ENCODE measurements at regions of chr17 and their contacts with region 1.

Region 1: GRCh38 chr17:21126645-21127510 is at the start of gene DHRS7B:
- DNase-seq: peak; percentile 98
- H3K4me3 Mint-ChIP-seq: peak within 1 kb of the TSS; percentile 90
- H3K27ac Mint-ChIP-seq: peak within 1 kb of the TSS; percentile 88
- H3K4me1 Mint-ChIP-seq: peaks cover 31% of the 10 kb centered on the region
- H3K27me3 Mint-ChIP-seq: peaks cover 1% of the 10 kb centered on the region
- total RNA-seq, gene DHRS7B: 13.5 to 15.9 TPM

Region 2: DNA sequence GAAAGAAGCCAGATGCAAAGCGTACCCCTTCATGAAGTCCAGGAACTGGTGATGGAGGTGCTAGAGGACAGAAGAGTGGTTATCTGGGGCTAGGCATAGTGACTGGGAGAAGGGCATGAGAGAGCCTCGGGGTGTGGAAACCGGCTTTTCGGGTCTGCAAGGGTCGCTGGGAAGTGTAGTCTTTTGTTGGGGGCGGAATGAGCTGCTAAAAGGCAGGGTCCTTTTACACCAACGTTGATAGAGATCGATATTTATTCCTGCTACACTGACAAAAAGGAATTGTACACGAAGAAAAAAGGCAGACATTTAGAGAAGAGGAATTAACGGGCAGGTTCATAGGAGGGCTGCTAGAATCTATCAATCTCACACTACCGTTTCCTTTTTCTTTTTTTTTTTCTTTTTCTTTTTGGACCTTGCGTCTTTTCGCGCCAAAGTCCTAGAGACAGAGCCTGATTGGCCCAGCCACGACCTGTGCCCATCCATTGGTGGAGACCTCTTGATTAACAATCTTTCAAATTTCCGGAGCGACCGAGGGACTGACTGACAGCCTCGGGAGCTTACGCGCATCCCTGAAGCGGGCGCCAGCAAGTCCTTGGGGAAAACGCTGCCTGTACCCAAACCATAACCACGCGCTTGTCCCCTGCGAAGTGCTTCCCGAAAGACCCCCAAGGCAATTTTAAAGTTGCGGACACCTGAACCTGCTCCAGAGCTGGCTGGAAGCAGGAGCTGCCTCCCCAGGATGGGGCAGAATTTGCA is 27.8 kb before region 1 on chr17:
- CTCF ChIA-PET with region 1: interaction called, 4 read pairs
- POLR2A ChIA-PET with region 1: no interaction called
- intact Hi-C with region 1: loop called (anchors 1 kb)
- DNase-seq: peak; percentile 87
- H3K4me3 Mint-ChIP-seq: peak overlapping the region; percentile 97
- H3K27ac Mint-ChIP-seq: peak overlapping the region; percentile 88
- H3K4me1 Mint-ChIP-seq: peaks cover 4% of the 10 kb centered on the region
- H3K27me3 Mint-ChIP-seq: no peaks in the 10 kb centered on the region

Region 3: DNA sequence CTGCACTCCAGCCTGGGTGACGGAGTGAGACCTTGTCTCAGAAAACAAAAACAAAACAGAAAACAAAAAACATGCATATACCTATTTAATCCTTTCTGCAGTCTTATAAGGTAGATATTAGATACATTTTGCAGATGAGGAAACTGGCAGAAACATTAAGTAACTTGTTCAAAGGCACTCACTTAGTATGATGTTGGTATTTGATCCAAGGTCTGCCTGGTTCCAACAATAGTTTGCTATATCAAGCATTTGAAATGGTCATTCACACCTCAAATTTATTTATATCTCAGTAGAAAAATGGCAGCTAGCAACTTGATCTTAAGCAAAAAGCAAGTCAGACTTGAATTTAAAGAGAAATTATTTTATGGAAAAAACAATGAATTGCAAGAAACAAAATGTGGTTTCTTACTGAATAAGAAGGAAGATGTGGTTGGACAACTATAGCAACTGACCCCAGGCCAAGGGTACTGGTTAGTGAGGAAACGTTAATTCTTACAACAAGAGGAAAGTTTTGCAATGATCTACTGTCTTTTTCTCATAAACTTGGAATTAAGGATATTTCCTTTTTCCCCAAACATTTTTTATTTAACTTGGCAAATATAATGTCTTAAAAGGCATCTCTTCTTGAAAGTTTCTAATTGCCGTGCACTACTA is 19.6 kb after region 1 on chr17:
- CTCF ChIA-PET with region 1: no interaction called
- POLR2A ChIA-PET with region 1: no interaction called
- intact Hi-C with region 1: no loop called
- DNase-seq: no peak
- H3K4me3 Mint-ChIP-seq: no peak overlapping the region
- H3K27ac Mint-ChIP-seq: no peak overlapping the region
- H3K4me1 Mint-ChIP-seq: no peaks in the 10 kb centered on the region
- H3K27me3 Mint-ChIP-seq: no peaks in the 10 kb centered on the region

Region 4: DNA sequence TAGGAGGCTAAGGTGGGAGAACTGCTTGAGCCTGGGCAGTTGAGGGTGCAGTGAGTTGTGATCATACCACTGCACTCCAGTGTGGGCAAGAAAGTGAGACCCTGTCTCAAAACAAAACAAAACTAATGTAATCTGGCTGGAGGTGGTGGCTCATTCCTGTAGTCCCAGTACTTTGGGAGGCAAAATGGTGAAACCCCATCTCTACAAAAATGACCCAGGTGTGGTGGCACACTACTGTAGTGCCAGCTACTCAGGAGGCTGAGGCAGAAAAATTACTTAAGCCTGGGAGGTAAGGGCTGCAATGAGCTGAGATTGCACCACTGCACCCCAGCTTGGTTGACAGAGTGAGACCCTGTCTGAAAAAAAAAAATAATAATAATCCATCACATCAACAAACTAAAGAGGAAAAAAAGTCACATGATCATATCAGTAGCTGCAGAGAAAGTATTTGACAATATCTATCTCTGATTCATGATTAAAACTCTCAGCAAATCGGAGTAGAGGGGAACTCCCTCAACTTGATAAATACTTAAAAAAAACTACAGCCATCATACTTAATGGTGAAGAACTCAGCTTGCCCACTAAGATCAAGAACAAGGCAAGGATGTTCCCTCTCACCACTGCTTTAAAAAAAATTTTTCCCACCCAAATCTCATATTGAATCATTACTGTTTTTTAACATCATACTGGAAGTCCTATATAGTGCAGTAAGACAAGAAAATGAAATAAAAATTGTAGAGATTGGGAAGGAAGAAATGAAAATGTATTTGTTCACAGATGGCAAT is 30.9 kb after region 1 on chr17:
- CTCF ChIA-PET with region 1: interaction called, 3 read pairs
- POLR2A ChIA-PET with region 1: no interaction called
- intact Hi-C with region 1: loop called (anchors 2 kb)
- DNase-seq: peak; percentile 23
- H3K4me3 Mint-ChIP-seq: no peak overlapping the region
- H3K27ac Mint-ChIP-seq: no peak overlapping the region
- H3K4me1 Mint-ChIP-seq: peaks cover 20% of the 10 kb centered on the region
- H3K27me3 Mint-ChIP-seq: no peaks in the 10 kb centered on the region

Region 5: DNA sequence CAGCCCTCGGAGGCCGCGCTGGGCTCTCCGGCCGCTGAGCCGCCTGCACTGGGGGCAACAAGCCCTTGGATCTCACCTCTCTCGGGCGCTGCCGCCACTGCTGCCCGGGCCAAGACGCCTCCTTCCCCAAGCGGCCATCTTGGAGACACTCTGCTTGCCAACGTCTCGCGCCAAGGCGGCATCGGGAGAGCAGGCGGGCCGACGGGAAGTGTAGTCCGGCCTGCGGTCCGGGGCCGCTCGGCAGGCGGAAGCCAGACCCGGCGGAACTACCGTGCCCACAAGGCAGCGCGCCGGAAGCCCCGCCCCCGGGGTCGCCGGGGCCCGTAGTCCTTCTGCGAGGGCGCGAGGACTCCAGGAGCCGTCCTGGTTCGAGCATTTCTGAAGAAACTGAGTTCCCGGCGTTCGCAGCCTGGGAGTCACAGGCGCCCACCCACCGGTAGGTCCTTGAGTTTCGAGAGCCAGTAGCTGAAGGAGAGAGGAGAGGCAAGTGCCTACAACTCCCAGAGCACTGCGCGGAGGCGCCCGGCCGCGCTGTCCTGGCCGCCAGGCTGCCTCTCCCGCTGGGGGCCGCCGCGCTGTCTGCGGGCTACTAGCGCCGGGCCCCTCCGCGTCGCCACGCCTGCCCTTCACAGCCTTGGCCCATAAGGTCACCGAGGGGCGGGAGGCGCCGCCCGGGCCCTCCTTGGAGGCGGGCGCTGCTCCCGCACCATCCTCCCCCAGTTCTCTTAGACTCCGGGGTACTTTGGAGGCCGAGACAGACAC is 87.3 kb after region 1 on chr17 and contains the start of gene TMEM11:
- CTCF ChIA-PET with region 1: interaction called, 3 read pairs
- POLR2A ChIA-PET with region 1: no interaction called
- intact Hi-C with region 1: loop called (anchors 1 kb)
- DNase-seq: peak; percentile 96
- H3K4me3 Mint-ChIP-seq: peak within 1 kb of the TSS; percentile 84
- H3K27ac Mint-ChIP-seq: peak within 1 kb of the TSS; percentile 91
- H3K4me1 Mint-ChIP-seq: peaks cover 68% of the 10 kb centered on the region
- H3K27me3 Mint-ChIP-seq: no peaks in the 10 kb centered on the region
- total RNA-seq, gene TMEM11: 24.0 to 27.2 TPM

Region 6: GRCh38 chr17:21275579-21276263 is 148.8 kb after region 1 on chr17:
- CTCF ChIA-PET with region 1: interaction called, 30 read pairs
- POLR2A ChIA-PET with region 1: no interaction called
- intact Hi-C with region 1: loop called (anchors 1 kb)
- DNase-seq: peak; percentile 96
- H3K4me3 Mint-ChIP-seq: peak overlapping the region; percentile 90
- H3K27ac Mint-ChIP-seq: peak overlapping the region; percentile 82
- H3K4me1 Mint-ChIP-seq: peaks cover 45% of the 10 kb centered on the region
- H3K27me3 Mint-ChIP-seq: no peaks in the 10 kb centered on the region

Region 7: GRCh38 chr17:21457051-21458026 is 330.5 kb after region 1 on chr17:
- CTCF ChIA-PET with region 1: no interaction called
- POLR2A ChIA-PET with region 1: no interaction called
- intact Hi-C with region 1: loop called (anchors 2 kb)
- DNase-seq: peak; percentile 97
- H3K4me3 Mint-ChIP-seq: no peak overlapping the region
- H3K27ac Mint-ChIP-seq: peak overlapping the region; percentile 53
- H3K4me1 Mint-ChIP-seq: peaks cover 14% of the 10 kb centered on the region
- H3K27me3 Mint-ChIP-seq: peaks cover 6% of the 10 kb centered on the region

Region 8: DNA sequence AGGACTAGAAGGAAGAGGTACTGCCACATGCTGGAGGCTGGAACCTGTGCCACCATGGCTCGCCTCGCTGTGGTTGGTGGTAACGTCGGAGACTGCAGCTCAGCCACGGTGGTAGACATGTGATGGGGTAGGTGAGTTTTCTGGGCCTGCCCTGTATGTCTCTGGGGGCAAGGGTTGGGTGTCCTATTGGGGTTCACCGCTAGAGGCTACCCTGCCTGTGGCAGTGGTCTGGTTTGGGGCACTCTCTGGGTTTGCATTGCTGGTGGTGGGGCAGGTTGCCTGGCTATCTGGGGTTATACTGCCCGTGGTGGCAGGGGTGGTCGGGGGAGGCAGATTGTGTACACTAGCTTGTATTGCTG is 486.2 kb after region 1 on chr17:
- CTCF ChIA-PET with region 1: no interaction called
- POLR2A ChIA-PET with region 1: no interaction called
- intact Hi-C with region 1: no loop called
- DNase-seq: no peak
- H3K4me3 Mint-ChIP-seq: no peak overlapping the region
- H3K27ac Mint-ChIP-seq: no peak overlapping the region
- H3K4me1 Mint-ChIP-seq: no peaks in the 10 kb centered on the region
- H3K27me3 Mint-ChIP-seq: no peaks in the 10 kb centered on the region